ENCODE measurements at regions of chr15 and their contacts with region 1.

Region 1: GRCh38 chr15:34209421-34210282 is at the start of gene KATNBL1:
- DNase-seq: peak; percentile 95 to 96
- H3K4me3 ChIP-seq: peak within 1 kb of the TSS; percentile 44
- H3K4me3 Mint-ChIP-seq: peak within 1 kb of the TSS; percentile 80
- H3K27ac Mint-ChIP-seq: peak within 1 kb of the TSS; percentile 87
- H3K4me1 ChIP-seq: peaks cover 8% of the 10 kb centered on the region; the same call in 1 of the 2 replicates
- H3K4me1 Mint-ChIP-seq: peaks cover 10% of the 10 kb centered on the region
- H3K27me3 ChIP-seq: no peaks in the 10 kb centered on the region
- H3K27me3 Mint-ChIP-seq: no peaks in the 10 kb centered on the region
- CTCF ChIP-seq: peak; percentile 88 to 93
- total RNA-seq, gene KATNBL1: 22.6 and 25.9 TPM in 2 replicates

Region 2: DNA sequence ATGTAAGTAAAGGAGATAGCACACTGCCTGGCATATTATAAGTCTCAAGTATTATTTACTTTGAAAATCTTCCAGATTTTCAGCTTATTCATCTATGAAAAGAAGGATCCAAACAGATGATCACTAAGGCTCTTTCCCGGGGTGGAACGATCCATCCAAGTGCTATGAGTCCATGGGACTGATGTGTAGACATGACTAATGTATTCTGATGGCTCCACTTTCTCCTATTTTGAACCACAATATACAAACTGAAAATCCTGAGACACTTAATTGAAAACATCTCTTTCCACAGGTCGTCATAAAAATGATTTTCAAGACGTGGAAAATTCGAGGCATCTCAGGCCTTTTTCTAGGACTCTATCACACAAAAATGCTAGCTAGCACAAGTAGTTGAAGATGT is 274.7 kb before region 1 on chr15:
- CTCF ChIA-PET with region 1: no interaction called
- POLR2A ChIA-PET with region 1: no interaction called
- intact Hi-C with region 1: loop called (anchors 5 kb)
- DNase-seq: no peak
- H3K4me3 ChIP-seq: no peak overlapping the region
- H3K4me3 Mint-ChIP-seq: no peak overlapping the region
- H3K27ac Mint-ChIP-seq: no peak overlapping the region
- H3K4me1 ChIP-seq: no peaks in the 10 kb centered on the region
- H3K4me1 Mint-ChIP-seq: no peaks in the 10 kb centered on the region
- H3K27me3 ChIP-seq: no peaks in the 10 kb centered on the region
- H3K27me3 Mint-ChIP-seq: no peaks in the 10 kb centered on the region
- CTCF ChIP-seq: no peak

Region 3: DNA sequence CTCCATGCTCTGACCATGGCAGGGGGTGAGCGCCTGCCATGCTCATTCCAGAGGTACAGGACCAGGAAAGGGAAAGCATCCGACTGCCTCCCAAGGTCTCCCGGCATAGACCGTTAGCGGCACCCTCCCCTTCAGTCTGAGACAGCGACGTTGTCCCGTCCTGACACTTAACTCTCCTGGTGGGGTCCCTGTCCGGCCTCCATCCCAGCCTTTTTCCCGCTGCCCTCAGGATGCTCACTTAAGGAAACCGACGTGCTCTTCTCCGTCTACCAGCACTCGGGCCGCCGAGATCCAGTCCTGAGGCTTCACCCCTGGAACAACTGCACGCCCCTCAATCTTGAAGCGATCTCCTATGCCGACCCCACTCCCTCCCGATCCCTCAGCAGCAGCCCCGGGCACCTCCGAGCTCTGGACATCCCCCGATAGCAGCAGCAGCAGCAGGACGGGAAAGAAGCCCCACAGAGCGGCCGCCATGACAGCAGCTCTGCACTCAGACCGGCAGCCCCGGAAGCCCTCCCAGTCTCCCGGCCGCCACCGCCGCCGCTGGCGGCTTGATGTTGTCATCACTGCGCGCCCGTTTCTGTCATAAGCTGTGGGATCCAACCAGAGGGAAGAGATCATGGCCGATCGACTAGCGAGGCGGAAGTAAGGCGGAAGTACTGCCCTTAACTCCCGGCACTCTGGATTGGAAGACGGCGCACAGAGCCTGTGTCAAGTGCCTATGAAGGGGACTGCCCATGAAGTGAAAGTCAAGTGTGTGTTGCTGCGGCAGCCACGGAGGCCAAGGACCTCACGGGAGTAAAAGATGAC is 108.1 kb before region 1 on chr15 and contains the starts of genes EMC7 and PGBD4:
- CTCF ChIA-PET with region 1: no interaction called
- POLR2A ChIA-PET with region 1: interaction called, 11 read pairs
- intact Hi-C with region 1: loop called (anchors 1 kb)
- DNase-seq: peak; percentile 98
- H3K4me3 ChIP-seq: peak within 1 kb of the TSS; percentile 92
- H3K4me3 Mint-ChIP-seq: peak within 1 kb of the TSS; percentile 100
- H3K27ac Mint-ChIP-seq: peak within 1 kb of the TSS; percentile 99
- H3K4me1 ChIP-seq: peaks cover 5% of the 10 kb centered on the region; the same call in 1 of the 2 replicates
- H3K4me1 Mint-ChIP-seq: no peaks in the 10 kb centered on the region
- H3K27me3 ChIP-seq: no peaks in the 10 kb centered on the region
- H3K27me3 Mint-ChIP-seq: no peaks in the 10 kb centered on the region
- CTCF ChIP-seq: no peak
- total RNA-seq, gene EMC7: 70.2 and 74.2 TPM in 2 replicates
- total RNA-seq, gene PGBD4: 1.5 and 1.7 TPM in 2 replicates

Region 4: DNA sequence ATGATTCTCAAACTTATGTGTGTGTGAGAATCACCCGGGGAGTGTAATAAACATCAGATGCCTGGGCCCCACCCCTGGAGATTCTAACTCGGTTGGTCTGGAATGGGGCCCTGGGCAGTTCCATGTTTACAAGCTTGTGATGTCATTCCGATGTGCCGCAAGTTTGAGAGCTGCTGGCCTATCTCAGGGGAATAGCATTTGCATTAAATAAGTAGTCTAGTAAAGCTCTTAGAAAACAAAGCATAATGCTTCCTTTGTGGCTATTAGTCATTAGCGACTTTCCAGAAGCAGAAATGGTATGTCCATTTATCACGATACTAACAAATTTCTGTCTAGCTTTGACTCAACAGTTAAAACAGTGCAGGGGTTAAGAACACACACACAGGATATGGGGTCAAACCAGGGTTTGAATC is 86.9 kb before region 1 on chr15:
- CTCF ChIA-PET with region 1: interaction called, 3 read pairs
- POLR2A ChIA-PET with region 1: interaction called, 3 read pairs
- intact Hi-C with region 1: loop called (anchors 2 kb)
- DNase-seq: no peak
- H3K4me3 ChIP-seq: no peak overlapping the region
- H3K4me3 Mint-ChIP-seq: no peak overlapping the region
- H3K27ac Mint-ChIP-seq: no peak overlapping the region
- H3K4me1 ChIP-seq: no peaks in the 10 kb centered on the region
- H3K4me1 Mint-ChIP-seq: peaks cover 10% of the 10 kb centered on the region
- H3K27me3 ChIP-seq: no peaks in the 10 kb centered on the region
- H3K27me3 Mint-ChIP-seq: no peaks in the 10 kb centered on the region
- CTCF ChIP-seq: no peak

Region 5: GRCh38 chr15:34182942-34183341 is 26.7 kb before region 1 on chr15:
- CTCF ChIA-PET with region 1: no interaction called
- POLR2A ChIA-PET with region 1: no interaction called
- intact Hi-C with region 1: no loop called
- DNase-seq: peak; percentile 29 to 43
- H3K4me3 ChIP-seq: no peak overlapping the region
- H3K4me3 Mint-ChIP-seq: no peak overlapping the region
- H3K27ac Mint-ChIP-seq: no peak overlapping the region
- H3K4me1 ChIP-seq: no peaks in the 10 kb centered on the region
- H3K4me1 Mint-ChIP-seq: peaks cover 22% of the 10 kb centered on the region
- H3K27me3 ChIP-seq: no peaks in the 10 kb centered on the region
- H3K27me3 Mint-ChIP-seq: no peaks in the 10 kb centered on the region
- CTCF ChIP-seq: no peak

Region 6: DNA sequence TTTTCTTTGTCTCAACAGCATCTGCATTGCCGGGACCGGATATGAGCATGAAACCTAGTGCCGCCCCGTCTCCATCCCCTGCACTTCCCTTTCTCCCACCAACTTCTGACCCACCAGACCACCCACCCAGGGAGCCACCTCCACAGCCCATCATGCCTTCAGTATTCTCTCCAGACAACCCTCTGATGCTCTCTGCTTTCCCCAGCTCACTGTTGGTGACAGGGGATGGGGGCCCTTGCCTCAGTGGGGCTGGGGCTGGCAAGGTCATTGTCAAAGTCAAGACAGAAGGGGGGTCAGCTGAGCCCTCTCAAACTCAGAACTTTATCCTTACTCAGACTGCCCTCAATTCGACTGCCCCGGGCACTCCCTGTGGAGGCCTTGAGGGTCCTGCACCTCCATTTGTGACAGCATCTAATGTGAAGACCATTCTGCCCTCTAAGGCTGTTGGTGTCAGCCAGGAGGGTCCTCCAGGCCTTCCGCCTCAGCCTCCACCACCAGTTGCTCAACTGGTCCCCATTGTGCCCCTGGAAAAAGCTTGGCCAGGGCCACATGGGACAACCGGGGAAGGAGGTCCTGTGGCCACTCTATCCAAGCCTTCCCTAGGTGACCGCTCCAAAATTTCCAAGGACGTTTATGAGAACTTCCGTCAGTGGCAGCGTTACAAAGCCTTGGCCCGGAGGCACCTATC is 138.4 kb after region 1 on chr15:
- CTCF ChIA-PET with region 1: no interaction called
- POLR2A ChIA-PET with region 1: no interaction called
- intact Hi-C with region 1: no loop called
- DNase-seq: no peak
- H3K4me3 ChIP-seq: no peak overlapping the region
- H3K4me3 Mint-ChIP-seq: no peak overlapping the region
- H3K27ac Mint-ChIP-seq: no peak overlapping the region
- H3K4me1 ChIP-seq: no peaks in the 10 kb centered on the region
- H3K4me1 Mint-ChIP-seq: no peaks in the 10 kb centered on the region
- H3K27me3 ChIP-seq: no peaks in the 10 kb centered on the region
- H3K27me3 Mint-ChIP-seq: no peaks in the 10 kb centered on the region
- CTCF ChIP-seq: no peak

Region 7: GRCh38 chr15:34367101-34368081 is 157.7 kb after region 1 on chr15 and contains the start of gene LPCAT4:
- CTCF ChIA-PET with region 1: interaction called, 3 read pairs
- POLR2A ChIA-PET with region 1: no interaction called
- intact Hi-C with region 1: loop called (anchors 1 kb)
- DNase-seq: peak; percentile 84 to 88
- H3K4me3 ChIP-seq: peak within 1 kb of the TSS; percentile 71
- H3K4me3 Mint-ChIP-seq: peak within 1 kb of the TSS; percentile 94
- H3K27ac Mint-ChIP-seq: peak within 1 kb of the TSS; percentile 56
- H3K4me1 ChIP-seq: peaks cover 8% of the 10 kb centered on the region; the same call in 1 of the 2 replicates
- H3K4me1 Mint-ChIP-seq: no peaks in the 10 kb centered on the region
- H3K27me3 ChIP-seq: no peaks in the 10 kb centered on the region
- H3K27me3 Mint-ChIP-seq: no peaks in the 10 kb centered on the region
- CTCF ChIP-seq: peak; percentile 80 to 91
- total RNA-seq, gene LPCAT4: 35.3 and 37.9 TPM in 2 replicates

Region 8: DNA sequence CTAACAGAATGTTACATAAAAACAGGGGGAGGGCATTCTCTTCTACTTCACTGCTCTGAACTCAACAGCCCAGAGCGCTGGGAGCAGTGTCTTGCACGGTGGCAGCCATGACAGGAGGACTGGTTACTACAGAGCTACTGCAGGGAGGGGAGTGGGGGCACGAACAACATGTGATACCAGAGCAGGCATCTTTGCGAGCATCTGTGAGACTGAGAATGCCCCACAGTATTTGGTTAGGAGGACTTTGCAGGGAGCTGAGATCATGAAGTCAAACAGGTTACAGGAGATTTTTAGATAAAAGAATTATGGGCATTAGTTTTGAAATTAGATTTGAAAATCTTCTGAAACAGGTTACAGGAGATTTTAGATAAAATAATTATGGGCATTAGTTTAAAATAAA is 432.6 kb after region 1 on chr15:
- CTCF ChIA-PET with region 1: no interaction called
- POLR2A ChIA-PET with region 1: no interaction called
- intact Hi-C with region 1: no loop called
- DNase-seq: no peak
- H3K4me3 ChIP-seq: no peak overlapping the region
- H3K4me3 Mint-ChIP-seq: no peak overlapping the region
- H3K27ac Mint-ChIP-seq: no peak overlapping the region
- H3K4me1 ChIP-seq: no peaks in the 10 kb centered on the region
- H3K4me1 Mint-ChIP-seq: no peaks in the 10 kb centered on the region
- H3K27me3 ChIP-seq: no peaks in the 10 kb centered on the region
- H3K27me3 Mint-ChIP-seq: peaks cover 8% of the 10 kb centered on the region
- CTCF ChIP-seq: no peak